ENCODE measurements at regions of chr11 and their contacts with region 1.

Region 1: GRCh38 chr11:121372671-121373429 is 79.3 kb upstream of the SORL1 start:
- DNase-seq: peak in 5 of 9 donors; percentile 19 to 34 (median 23)
- ATAC-seq: peak; percentile 56
- H3K4me3 ChIP-seq: peak overlapping the region; percentile 1
- H3K4me3 Mint-ChIP-seq: peak overlapping the region; percentile 34 to 83 (median 68)
- H3K27ac ChIP-seq: peak overlapping the region; percentile 4
- H3K27ac Mint-ChIP-seq: peak overlapping the region; percentile 72 to 92 (median 83)
- H3K4me1 ChIP-seq: peaks cover 7 to 59% of the 10 kb centered on the region in 2 donors
- H3K4me1 Mint-ChIP-seq: peaks cover 35 to 99% (median 79%) of the 10 kb centered on the region in 7 donors
- H3K27me3 ChIP-seq: no peaks in the 10 kb centered on the region
- H3K27me3 Mint-ChIP-seq: no peaks in the 10 kb centered on the region

Region 2: DNA sequence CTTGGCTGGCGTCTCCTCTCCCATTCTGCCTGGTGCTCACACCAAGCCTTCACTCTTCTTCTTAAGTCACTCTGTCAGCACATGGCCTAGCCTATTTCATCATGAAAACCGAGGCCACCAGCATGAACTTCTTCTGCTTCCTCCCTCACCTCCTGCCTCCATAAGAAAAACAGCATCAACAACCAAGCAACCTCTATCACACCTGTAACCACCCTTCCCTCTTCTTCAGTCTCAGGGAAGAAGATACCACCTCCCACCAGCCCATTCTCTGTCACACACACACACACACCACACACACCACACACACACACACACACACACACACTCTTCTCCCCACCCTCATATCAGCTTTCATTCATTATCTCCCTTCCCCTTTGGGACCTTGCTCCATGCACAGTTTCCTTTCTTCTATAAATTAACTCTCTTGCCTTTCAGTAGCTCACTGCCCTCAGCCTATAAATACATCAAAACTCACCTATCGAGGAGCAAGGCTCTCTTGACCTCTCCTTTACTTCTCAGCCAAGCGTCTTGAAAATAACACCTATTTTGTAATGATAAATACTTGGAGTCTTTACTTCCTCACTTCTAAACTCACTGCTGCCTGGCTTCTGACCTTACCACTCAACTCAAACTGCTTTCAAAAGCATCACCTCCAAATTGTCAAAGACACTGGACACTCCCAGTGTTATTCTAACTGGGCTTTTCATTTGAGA is 43.7 kb before region 1 on chr11:
- CTCF ChIA-PET with region 1: interaction called, 7 read pairs
- POLR2A ChIA-PET with region 1: interaction called, 8 read pairs
- intact Hi-C with region 1: loop called in 1 of 2 experiments (anchors 2 kb)
- DNase-seq: peak in 4 of 9 donors; percentile 5 to 18 (median 8)
- ATAC-seq: peak; percentile 54
- H3K4me3 ChIP-seq: no peak overlapping the region
- H3K4me3 Mint-ChIP-seq: no peak overlapping the region
- H3K27ac ChIP-seq: no peak overlapping the region
- H3K27ac Mint-ChIP-seq: no peak overlapping the region
- H3K4me1 ChIP-seq: peaks cover 19 to 26% of the 10 kb centered on the region in 2 donors
- H3K4me1 Mint-ChIP-seq: peaks cover 3 to 20% (median 9%) of the 10 kb centered on the region in 7 donors
- H3K27me3 ChIP-seq: no peaks in the 10 kb centered on the region
- H3K27me3 Mint-ChIP-seq: peaks cover 0 to 2% (median 0%) of the 10 kb centered on the region in 5 donors

Region 3: GRCh38 chr11:121334973-121335710 is 37.7 kb before region 1 on chr11:
- CTCF ChIA-PET with region 1: no interaction called
- POLR2A ChIA-PET with region 1: interaction called, 5 read pairs
- intact Hi-C with region 1: loop called in 1 of 2 experiments (anchors 5 kb)
- DNase-seq: no peak
- ATAC-seq: no peak
- H3K4me3 ChIP-seq: no peak overlapping the region
- H3K4me3 Mint-ChIP-seq: peak overlapping the region in 2 of 10 donors; percentile 41 to 52
- H3K27ac ChIP-seq: no peak overlapping the region
- H3K27ac Mint-ChIP-seq: peak overlapping the region in 3 of 9 donors; percentile 3 to 64 (median 36)
- H3K4me1 ChIP-seq: peaks cover 0 to 8% of the 10 kb centered on the region in 2 donors
- H3K4me1 Mint-ChIP-seq: peaks cover 6 to 46% (median 19%) of the 10 kb centered on the region in 7 donors
- H3K27me3 ChIP-seq: no peaks in the 10 kb centered on the region
- H3K27me3 Mint-ChIP-seq: peaks cover 0 to 4% (median 0%) of the 10 kb centered on the region in 5 donors

Region 4: GRCh38 chr11:121394785-121395184 is 21.9 kb after region 1 on chr11:
- CTCF ChIA-PET with region 1: no interaction called
- POLR2A ChIA-PET with region 1: interaction called, 3 read pairs
- intact Hi-C with region 1: loop called in 1 of 2 experiments (anchors 2 kb)
- DNase-seq: no peak
- ATAC-seq: no peak
- H3K4me3 ChIP-seq: no peak overlapping the region
- H3K4me3 Mint-ChIP-seq: no peak overlapping the region
- H3K27ac ChIP-seq: no peak overlapping the region
- H3K27ac Mint-ChIP-seq: no peak overlapping the region
- H3K4me1 ChIP-seq: no peaks in the 10 kb centered on the region
- H3K4me1 Mint-ChIP-seq: peaks cover 6 to 32% (median 19%) of the 10 kb centered on the region in 7 donors
- H3K27me3 ChIP-seq: no peaks in the 10 kb centered on the region
- H3K27me3 Mint-ChIP-seq: no peaks in the 10 kb centered on the region

Region 5: GRCh38 chr11:121417055-121417551 is 44.3 kb after region 1 on chr11:
- CTCF ChIA-PET with region 1: interaction called, 3 read pairs
- POLR2A ChIA-PET with region 1: interaction called, 4 read pairs
- intact Hi-C with region 1: loop called in 1 of 2 experiments (anchors 2 kb)
- DNase-seq: peak; percentile 28 to 55 (median 40)
- ATAC-seq: peak; percentile 59
- H3K4me3 ChIP-seq: peak overlapping the region; percentile 20
- H3K4me3 Mint-ChIP-seq: peak overlapping the region; percentile 25 to 75 (median 62)
- H3K27ac ChIP-seq: peak overlapping the region; percentile 48
- H3K27ac Mint-ChIP-seq: peak overlapping the region; percentile 79 to 96 (median 89)
- H3K4me1 ChIP-seq: peaks cover 36 to 53% of the 10 kb centered on the region in 2 donors
- H3K4me1 Mint-ChIP-seq: peaks cover 47 to 82% (median 70%) of the 10 kb centered on the region in 7 donors
- H3K27me3 ChIP-seq: no peaks in the 10 kb centered on the region
- H3K27me3 Mint-ChIP-seq: no peaks in the 10 kb centered on the region

Measured in naive thymus-derived CD4-positive, alpha-beta T cell (primary cell).